Sciatic nerve (tissue), 2 donors: ENCODE measurements at regions of chr11 and their contacts with region 1.

Region 1: GRCh38 chr11:55673860-55674259 is 11.9 kb downstream of the OR4C6 start:
- DNase-seq: no peak
- ATAC-seq: no peak

Region 2: GRCh38 chr11:55658031-55658573 is 15.8 kb before region 1 on chr11:
- intact Hi-C with region 1: no loop called
- DNase-seq: no peak
- ATAC-seq: no peak

Region 3: GRCh38 chr11:56396047-56396446 is 722.2 kb after region 1 on chr11:
- intact Hi-C with region 1: no loop called
- DNase-seq: no peak
- ATAC-seq: no peak

Region 4: GRCh38 chr11:56799691-56800210 is 1125.9 kb after region 1 on chr11:
- intact Hi-C with region 1: no loop called
- DNase-seq: no peak
- ATAC-seq: no peak

Region 5: DNA sequence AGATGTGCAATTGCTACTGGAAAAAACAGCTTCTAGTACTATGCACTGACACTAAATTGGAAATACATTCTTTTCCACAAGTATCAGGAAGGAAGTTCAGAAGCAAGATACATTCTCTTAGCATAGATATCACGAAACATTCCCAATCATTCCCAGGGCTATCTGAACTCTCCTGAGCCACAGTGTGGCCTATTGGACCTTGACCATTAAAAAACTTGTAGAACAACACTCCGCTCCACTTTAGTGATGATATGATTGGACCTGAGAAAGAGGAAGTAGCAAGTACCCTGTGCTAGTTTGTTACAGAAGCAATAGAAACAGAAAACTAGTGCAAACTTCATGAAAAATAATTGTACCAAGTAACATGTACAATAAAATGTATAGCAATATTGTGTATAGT is 1303.5 kb after region 1 on chr11:
- intact Hi-C with region 1: loop called (anchors 5 kb)
- DNase-seq: no peak
- ATAC-seq: no peak